Panc1 (cell line): ENCODE measurements at regions of chr16 and their contacts with region 1.

Region 1: DNA sequence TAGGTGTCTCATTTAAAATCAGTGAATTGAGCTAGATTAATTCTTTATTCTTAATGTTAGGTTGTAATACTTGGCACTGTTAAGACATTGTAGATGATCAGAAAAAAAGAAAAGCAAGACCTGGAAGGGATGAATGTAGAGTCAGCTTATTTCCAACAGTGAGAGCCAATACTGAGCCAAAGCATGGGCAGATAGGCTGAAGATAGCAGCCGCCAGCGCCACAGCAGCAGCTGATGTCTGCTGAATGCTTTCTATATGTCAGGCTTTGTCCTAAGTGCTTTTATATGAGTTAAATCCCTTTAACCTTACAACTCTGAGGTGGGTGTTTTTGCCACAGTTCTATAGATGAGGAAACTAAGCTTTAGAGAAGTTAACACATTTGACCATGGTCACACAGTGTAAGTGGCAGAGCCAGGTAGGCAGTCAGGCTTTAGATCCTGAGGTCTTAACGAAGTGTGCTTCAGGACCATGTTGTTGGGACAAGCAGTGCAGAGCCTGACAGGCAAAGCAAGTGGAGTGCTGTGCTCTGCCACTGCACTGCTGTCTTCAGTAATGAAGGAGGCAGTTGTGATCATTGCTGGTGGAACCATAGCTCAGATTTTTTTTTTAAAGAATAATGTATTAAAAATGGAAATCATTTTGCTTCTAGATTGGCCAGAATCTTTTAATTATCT is 25.9 kb downstream of the TNRC6A start:
- DNase-seq: no peak
- ATAC-seq: no peak
- H3K4me3 ChIP-seq: no peak overlapping the region
- H3K27ac ChIP-seq: no peak overlapping the region
- H3K4me1 ChIP-seq: peaks cover 24% of the 10 kb centered on the region; the same call in 1 of the 2 replicates
- H3K27me3 ChIP-seq: no peaks in the 10 kb centered on the region
- CTCF ChIP-seq: no peak

Region 2: GRCh38 chr16:24789881-24790280 is 34.5 kb after region 1 on chr16:
- CTCF ChIA-PET with region 1: interaction called, 24 read pairs
- POLR2A ChIA-PET with region 1: no interaction called
- in situ Hi-C with region 1: no loop called
- intact Hi-C with region 1: no loop called
- DNase-seq: no peak
- ATAC-seq: no peak
- H3K4me3 ChIP-seq: no peak overlapping the region
- H3K27ac ChIP-seq: no peak overlapping the region
- H3K4me1 ChIP-seq: no peaks in the 10 kb centered on the region
- H3K27me3 ChIP-seq: no peaks in the 10 kb centered on the region
- CTCF ChIP-seq: no peak

Region 3: DNA sequence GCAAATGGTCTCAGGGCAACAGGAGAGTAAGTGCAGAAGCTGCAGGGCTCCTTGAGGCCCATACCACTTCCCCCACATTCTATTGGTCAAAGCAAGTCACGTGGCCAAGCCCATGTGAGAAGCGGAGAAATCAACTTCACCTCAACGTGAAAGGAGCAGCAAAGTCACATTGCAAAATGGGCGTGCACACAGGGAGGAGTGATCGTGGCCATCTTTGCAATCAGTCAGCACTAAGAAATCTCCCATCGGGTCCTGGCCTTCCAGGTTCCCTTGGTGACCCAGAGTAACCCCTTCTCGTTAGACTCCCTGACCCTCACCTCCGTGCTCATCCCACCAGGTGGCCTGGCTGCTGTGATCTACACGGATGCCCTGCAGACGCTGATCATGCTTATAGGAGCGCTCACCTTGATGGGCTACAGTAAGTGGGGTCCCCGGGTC is 128.4 kb after region 1 on chr16:
- CTCF ChIA-PET with region 1: no interaction called
- POLR2A ChIA-PET with region 1: interaction called, 19 read pairs
- in situ Hi-C with region 1: no loop called
- intact Hi-C with region 1: no loop called
- DNase-seq: no peak
- ATAC-seq: 0 out of 2 replicates have a peak, but pooled peaks have one; percentile 21
- H3K4me3 ChIP-seq: no peak overlapping the region
- H3K27ac ChIP-seq: no peak overlapping the region
- H3K4me1 ChIP-seq: no peaks in the 10 kb centered on the region
- H3K27me3 ChIP-seq: no peaks in the 10 kb centered on the region
- CTCF ChIP-seq: no peak